ENCODE measurements at regions of chr2 and their contacts with region 1.

Region 1: DNA sequence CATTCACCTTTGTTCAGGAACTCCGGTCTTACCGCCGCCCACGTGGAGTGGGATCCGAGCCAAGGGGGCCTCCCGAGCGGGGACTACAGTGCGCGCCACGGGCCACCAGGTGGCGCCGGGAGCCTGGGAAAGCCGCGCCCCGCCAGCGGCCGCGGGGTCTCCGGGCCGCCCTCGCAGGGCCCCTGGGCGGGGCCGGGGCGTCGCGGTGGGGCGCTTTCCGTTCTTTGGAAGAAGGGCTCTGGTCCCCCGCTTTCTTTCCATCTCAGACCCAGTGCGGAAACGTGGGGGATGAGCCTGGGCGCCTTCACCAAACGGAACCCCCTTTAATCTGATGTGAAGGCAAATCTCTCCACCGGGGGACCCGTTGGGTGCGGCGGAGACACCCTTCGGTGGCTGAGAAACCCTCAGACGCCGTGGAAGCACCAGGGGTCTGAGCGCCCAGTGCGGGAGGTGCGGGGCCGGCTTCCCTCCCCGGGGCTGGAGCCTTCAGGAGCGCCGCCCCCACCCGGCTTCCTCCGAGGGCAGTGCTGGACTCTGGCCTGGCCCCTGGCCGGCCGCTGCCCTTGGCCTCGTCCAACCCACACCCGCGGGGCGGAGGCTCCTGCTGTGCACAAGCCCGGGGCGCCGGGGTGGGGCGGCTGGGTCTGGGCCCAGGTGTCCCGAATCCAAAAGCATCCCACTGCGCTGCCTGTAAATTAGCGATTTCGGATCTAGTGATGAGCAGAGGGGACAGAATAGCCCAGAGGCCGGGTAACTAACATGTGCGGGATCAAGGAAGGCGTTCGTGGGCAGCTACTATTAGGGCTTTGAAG is 44.6 kb downstream of the GORASP2 start:
- DNase-seq: peak; percentile 91
- H3K4me3 ChIP-seq: peak overlapping the region; percentile 45 to 95 (median 71)
- H3K27ac ChIP-seq: peak overlapping the region; percentile 75 to 91 (median 86)
- H3K4me1 ChIP-seq: peaks cover 5 to 20% (median 11%) of the 10 kb centered on the region in 4 donors
- H3K27me3 ChIP-seq: no peaks in the 10 kb centered on the region
- CTCF ChIP-seq: peak; percentile 86 to 94 (median 93)
- EP300 ChIP-seq: no peak
- POLR2A ChIP-seq: peak; percentile 49

Region 2: GRCh38 chr2:171069286-171069956 is 95.7 kb after region 1 on chr2:
- in situ Hi-C with region 1: no loop called
- intact Hi-C with region 1: loop called (anchors 10 kb)
- DNase-seq: no peak
- H3K4me3 ChIP-seq: no peak overlapping the region
- H3K27ac ChIP-seq: no peak overlapping the region
- H3K4me1 ChIP-seq: peaks cover 0 to 28% (median 3%) of the 10 kb centered on the region in 4 donors
- H3K27me3 ChIP-seq: no peaks in the 10 kb centered on the region
- CTCF ChIP-seq: no peak
- EP300 ChIP-seq: no peak
- POLR2A ChIP-seq: no peak

Region 3: GRCh38 chr2:171160119-171160955 is 186.6 kb after region 1 on chr2 and contains the start of gene TLK1:
- in situ Hi-C with region 1: loop called in 2 of 4 experiments (anchors 10 to 25 kb)
- intact Hi-C with region 1: loop called (anchors 5 kb)
- DNase-seq: peak; percentile 71
- H3K4me3 ChIP-seq: peak within 1 kb of the TSS; percentile 70 to 91 (median 84)
- H3K27ac ChIP-seq: peak within 1 kb of the TSS; percentile 93 to 98 (median 98)
- H3K4me1 ChIP-seq: peaks cover 3 to 43% (median 22%) of the 10 kb centered on the region in 4 donors
- H3K27me3 ChIP-seq: no peaks in the 10 kb centered on the region
- CTCF ChIP-seq: peak in 1 of 5 experiments; percentile 7
- EP300 ChIP-seq: no peak
- POLR2A ChIP-seq: peak; percentile 44
- total RNA-seq, gene TLK1: 39.6 to 76.3 (median 53.2) TPM

Region 4: GRCh38 chr2:171610824-171611223 is 637.1 kb after region 1 on chr2:
- in situ Hi-C with region 1: no loop called
- intact Hi-C with region 1: no loop called
- DNase-seq: no peak
- H3K4me3 ChIP-seq: no peak overlapping the region
- H3K27ac ChIP-seq: no peak overlapping the region
- H3K4me1 ChIP-seq: no peaks in the 10 kb centered on the region
- H3K27me3 ChIP-seq: peaks cover under 1% of the 10 kb centered on the region
- CTCF ChIP-seq: no peak
- EP300 ChIP-seq: no peak
- POLR2A ChIP-seq: no peak